ENCODE measurements at regions of chr15 and their contacts with region 1.

Region 1: DNA sequence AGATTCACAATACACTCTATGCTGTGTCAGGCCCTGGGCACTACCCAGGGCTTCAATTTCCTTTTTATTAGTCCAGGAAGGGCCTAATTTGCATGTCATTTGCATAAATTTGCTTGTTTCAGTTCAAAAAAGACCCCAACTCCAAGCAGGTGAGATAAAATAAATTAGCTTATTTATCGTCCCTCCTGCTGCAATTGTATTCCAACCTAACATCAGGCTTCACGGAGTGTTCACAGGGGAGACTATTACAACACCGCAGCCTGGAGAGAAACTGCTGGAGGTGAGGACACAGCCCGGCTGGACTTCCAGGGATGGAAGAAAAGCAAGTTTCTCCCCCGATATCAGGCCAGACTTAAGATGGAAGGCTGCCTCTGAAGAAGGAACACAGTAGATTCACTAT is 62.8 kb downstream of the MEGF11 start:
- DNase-seq: no peak
- ATAC-seq: no peak
- H3K4me3 ChIP-seq: no peak overlapping the region
- H3K27ac ChIP-seq: no peak overlapping the region
- H3K4me1 ChIP-seq: no peaks in the 10 kb centered on the region
- H3K27me3 ChIP-seq: peaks cover 29% of the 10 kb centered on the region
- CTCF ChIP-seq: no peak
- POLR2A ChIP-seq: no peak
- RAD21 ChIP-seq: no peak

Region 2: DNA sequence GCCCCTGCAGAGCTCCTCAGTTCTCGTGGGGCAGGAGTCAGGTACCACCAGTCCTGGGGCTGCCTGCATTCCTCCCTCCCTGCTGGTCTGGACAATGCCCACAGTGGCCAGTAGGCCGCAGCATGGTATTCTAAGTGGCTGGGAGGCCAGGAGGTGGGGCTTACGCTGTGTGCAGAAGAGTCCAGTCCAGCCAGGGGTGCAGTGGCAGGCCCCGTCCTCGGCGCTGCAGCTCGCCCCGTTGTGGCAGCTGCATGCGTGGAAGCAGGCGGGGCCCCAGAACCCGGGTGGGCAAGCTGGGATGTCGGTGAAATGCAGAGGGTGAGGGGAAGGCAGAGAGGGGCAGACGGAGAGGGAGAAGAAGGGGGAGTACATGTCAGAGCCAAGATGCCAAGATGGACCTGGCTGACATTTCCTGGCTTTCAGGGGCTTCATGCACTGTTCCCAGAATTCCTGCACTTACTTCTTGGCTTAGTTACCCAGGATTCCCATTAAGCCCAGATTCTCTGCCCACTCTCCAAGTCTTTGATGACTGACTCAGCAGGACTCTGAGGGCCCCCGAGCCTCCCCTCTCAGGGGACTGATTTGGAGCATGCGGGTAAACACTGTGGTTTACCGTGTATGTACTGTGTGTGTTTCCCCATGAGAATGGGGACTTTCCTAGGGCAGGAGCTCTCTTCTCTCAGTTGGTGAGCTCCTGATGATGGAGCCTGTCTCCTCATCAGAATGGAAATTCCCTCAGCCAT is 273.9 kb before region 1 on chr15:
- CTCF ChIA-PET with region 1: no interaction called
- POLR2A ChIA-PET with region 1: no interaction called
- dilution Hi-C with region 1: no loop called
- in situ Hi-C with region 1: no loop called
- intact Hi-C with region 1: loop called (anchors 1 kb)
- DNase-seq: peak; percentile 74
- ATAC-seq: peak; percentile 99
- H3K4me3 ChIP-seq: no peak overlapping the region
- H3K27ac ChIP-seq: no peak overlapping the region
- H3K4me1 ChIP-seq: peaks cover 5% of the 10 kb centered on the region; the same call in 1 of the 2 replicates
- H3K27me3 ChIP-seq: no peaks in the 10 kb centered on the region
- CTCF ChIP-seq: peak; percentile 78
- POLR2A ChIP-seq: no peak
- RAD21 ChIP-seq: peak; percentile 84